PC-9 (cell line): ENCODE measurements at regions of chr4 and their contacts with region 1.

Region 1: GRCh38 chr4:41418444-41418843 is 119.5 kb upstream of the LIMCH1 start:
- DNase-seq: no peak
- H3K4me3 ChIP-seq: no peak overlapping the region
- H3K27ac ChIP-seq: no peak overlapping the region
- H3K4me1 ChIP-seq: peaks cover 5% of the 10 kb centered on the region
- H3K27me3 ChIP-seq: no peaks in the 10 kb centered on the region
- CTCF ChIP-seq: no peak

Region 2: DNA sequence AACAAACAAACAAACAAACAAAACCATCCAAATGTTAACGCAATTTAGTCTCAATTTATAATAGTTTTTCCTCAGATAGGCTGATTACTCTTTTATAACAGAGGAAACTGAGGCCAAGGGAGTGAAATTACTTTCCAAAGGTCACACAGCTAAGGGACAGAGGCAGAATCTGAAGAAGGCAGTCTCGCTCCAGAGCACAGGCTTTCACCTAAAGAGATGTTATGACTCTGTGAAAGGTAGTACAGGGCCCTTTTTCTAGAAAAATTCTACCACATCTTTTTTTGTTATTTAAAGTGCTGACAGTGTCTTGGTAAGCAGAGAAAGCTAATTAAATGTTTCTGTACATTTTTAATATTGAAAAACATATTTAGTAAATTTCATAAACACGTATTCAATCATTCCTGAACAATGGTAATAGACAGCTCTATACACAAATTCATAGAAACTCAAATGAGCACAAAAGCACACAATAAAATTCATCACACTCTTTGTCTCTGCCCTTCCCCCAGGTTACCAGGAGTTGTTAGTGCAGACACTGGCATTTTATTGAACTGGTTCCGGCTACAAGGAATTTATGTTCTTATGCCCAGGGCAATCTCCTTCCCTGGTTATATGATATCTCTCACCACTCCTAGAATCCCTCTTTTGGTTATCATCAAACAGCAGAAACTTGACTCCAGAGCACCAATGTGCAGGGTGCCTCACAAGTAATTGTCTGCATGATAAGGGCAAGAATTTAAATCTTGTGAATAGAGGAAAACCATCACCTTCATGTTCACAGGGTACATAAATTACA is 196.4 kb before region 1 on chr4:
- CTCF ChIA-PET with region 1: no interaction called
- POLR2A ChIA-PET with region 1: interaction called, 16 read pairs
- intact Hi-C with region 1: no loop called
- DNase-seq: peak in 1 of 2 experiments; percentile 43
- H3K4me3 ChIP-seq: no peak overlapping the region
- H3K27ac ChIP-seq: no peak overlapping the region
- H3K4me1 ChIP-seq: peaks cover 14% of the 10 kb centered on the region
- H3K27me3 ChIP-seq: no peaks in the 10 kb centered on the region
- CTCF ChIP-seq: no peak

Region 3: GRCh38 chr4:41394362-41394960 is 24.0 kb before region 1 on chr4:
- CTCF ChIA-PET with region 1: no interaction called
- POLR2A ChIA-PET with region 1: interaction called, 12 read pairs
- intact Hi-C with region 1: no loop called
- DNase-seq: peak in 1 of 2 experiments; percentile 64
- H3K4me3 ChIP-seq: no peak overlapping the region
- H3K27ac ChIP-seq: peak overlapping the region; percentile 28; the same call in 1 of the 2 replicates
- H3K4me1 ChIP-seq: peaks cover 16% of the 10 kb centered on the region
- H3K27me3 ChIP-seq: no peaks in the 10 kb centered on the region
- CTCF ChIP-seq: no peak

Region 4: GRCh38 chr4:41437111-41437536 is 18.7 kb after region 1 on chr4:
- CTCF ChIA-PET with region 1: no interaction called
- POLR2A ChIA-PET with region 1: no interaction called
- intact Hi-C with region 1: no loop called
- DNase-seq: peak; percentile 14 to 66
- H3K4me3 ChIP-seq: no peak overlapping the region
- H3K27ac ChIP-seq: peak overlapping the region; percentile 32
- H3K4me1 ChIP-seq: peaks cover 53% of the 10 kb centered on the region
- H3K27me3 ChIP-seq: no peaks in the 10 kb centered on the region
- CTCF ChIP-seq: no peak

Region 5: GRCh38 chr4:41454423-41454822 is 36.0 kb after region 1 on chr4:
- CTCF ChIA-PET with region 1: no interaction called
- POLR2A ChIA-PET with region 1: interaction called, 19 read pairs
- intact Hi-C with region 1: no loop called
- DNase-seq: peak in 1 of 2 experiments; percentile 24
- H3K4me3 ChIP-seq: no peak overlapping the region
- H3K27ac ChIP-seq: no peak overlapping the region
- H3K4me1 ChIP-seq: peaks cover 25% of the 10 kb centered on the region
- H3K27me3 ChIP-seq: no peaks in the 10 kb centered on the region
- CTCF ChIP-seq: no peak